ENCODE measurements at regions of chr2 and their contacts with region 1.

Region 1: GRCh38 chr2:11129598-11130449 is 25.4 kb upstream of the SLC66A3 start:
- DNase-seq: no peak
- H3K4me3 ChIP-seq: peak overlapping the region in 2 of 3 experiments; percentile 16 to 35
- H3K27ac ChIP-seq: no peak overlapping the region
- H3K4me1 ChIP-seq: peaks cover 28% of the 10 kb centered on the region
- H3K27me3 ChIP-seq: no peaks in the 10 kb centered on the region
- CTCF ChIP-seq: peak; percentile 22 to 65

Region 2: GRCh38 chr2:11065883-11066485 is 63.8 kb before region 1 on chr2:
- CTCF ChIA-PET with region 1: no interaction called
- dilution Hi-C with region 1: loop called (anchors 5 kb)
- in situ Hi-C with region 1: no loop called
- intact Hi-C with region 1: no loop called
- DNase-seq: no peak
- H3K4me3 ChIP-seq: no peak overlapping the region
- H3K27ac ChIP-seq: no peak overlapping the region
- H3K4me1 ChIP-seq: no peaks in the 10 kb centered on the region
- H3K27me3 ChIP-seq: peaks cover 8% of the 10 kb centered on the region
- CTCF ChIP-seq: no peak

Region 3: DNA sequence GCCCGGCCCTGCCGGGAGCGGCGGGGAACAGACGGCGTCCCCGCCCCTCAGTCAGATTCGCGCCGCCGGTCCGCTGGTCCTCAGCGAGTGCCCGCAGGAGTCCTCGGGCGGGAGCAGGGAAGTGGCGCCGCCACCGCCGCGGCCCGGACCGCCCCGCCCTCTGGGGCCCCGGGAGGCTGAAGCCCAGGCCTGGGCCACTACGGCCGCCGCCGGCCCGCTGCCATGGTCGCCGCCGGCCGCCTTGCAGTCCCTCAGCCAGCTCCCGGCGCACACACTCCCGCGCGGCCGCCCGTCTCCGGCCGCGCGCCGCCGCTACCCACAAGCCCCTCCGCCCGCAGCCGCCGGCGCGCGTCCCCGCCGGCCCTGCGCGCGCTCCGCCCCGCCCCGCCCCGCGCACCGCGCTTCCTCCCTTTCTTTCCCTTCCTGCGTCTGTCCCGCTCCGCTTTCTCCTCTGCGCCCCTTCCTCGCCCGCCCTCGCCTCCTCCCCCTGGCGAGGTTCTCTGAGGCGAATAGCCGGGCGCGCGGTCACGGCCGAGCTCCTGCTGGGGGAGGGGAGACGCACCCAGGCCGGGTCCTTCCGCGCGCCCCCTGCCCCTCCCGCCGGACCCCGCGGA is 214.6 kb after region 1 on chr2 and contains the start of gene ROCK2:
- CTCF ChIA-PET with region 1: no interaction called
- dilution Hi-C with region 1: no loop called
- in situ Hi-C with region 1: no loop called
- intact Hi-C with region 1: loop called (anchors 2 kb)
- DNase-seq: peak; percentile 74
- H3K4me3 ChIP-seq: peak within 1 kb of the TSS; percentile 91 to 96 (median 92)
- H3K27ac ChIP-seq: peak within 1 kb of the TSS; percentile 93
- H3K4me1 ChIP-seq: peaks cover 24% of the 10 kb centered on the region
- H3K27me3 ChIP-seq: no peaks in the 10 kb centered on the region
- CTCF ChIP-seq: no peak
- total RNA-seq, gene ROCK2: 38.6 to 44.0 TPM

Region 4: GRCh38 chr2:11446733-11447248 is 317.0 kb after region 1 on chr2:
- CTCF ChIA-PET with region 1: interaction called, 6 read pairs
- dilution Hi-C with region 1: no loop called
- in situ Hi-C with region 1: loop called in 1 of 2 experiments (anchors 10 kb)
- intact Hi-C with region 1: loop called (anchors 1 kb)
- DNase-seq: peak; percentile 48
- H3K4me3 ChIP-seq: no peak overlapping the region
- H3K27ac ChIP-seq: no peak overlapping the region
- H3K4me1 ChIP-seq: no peaks in the 10 kb centered on the region
- H3K27me3 ChIP-seq: no peaks in the 10 kb centered on the region
- CTCF ChIP-seq: peak; percentile 71 to 88

Region 5: DNA sequence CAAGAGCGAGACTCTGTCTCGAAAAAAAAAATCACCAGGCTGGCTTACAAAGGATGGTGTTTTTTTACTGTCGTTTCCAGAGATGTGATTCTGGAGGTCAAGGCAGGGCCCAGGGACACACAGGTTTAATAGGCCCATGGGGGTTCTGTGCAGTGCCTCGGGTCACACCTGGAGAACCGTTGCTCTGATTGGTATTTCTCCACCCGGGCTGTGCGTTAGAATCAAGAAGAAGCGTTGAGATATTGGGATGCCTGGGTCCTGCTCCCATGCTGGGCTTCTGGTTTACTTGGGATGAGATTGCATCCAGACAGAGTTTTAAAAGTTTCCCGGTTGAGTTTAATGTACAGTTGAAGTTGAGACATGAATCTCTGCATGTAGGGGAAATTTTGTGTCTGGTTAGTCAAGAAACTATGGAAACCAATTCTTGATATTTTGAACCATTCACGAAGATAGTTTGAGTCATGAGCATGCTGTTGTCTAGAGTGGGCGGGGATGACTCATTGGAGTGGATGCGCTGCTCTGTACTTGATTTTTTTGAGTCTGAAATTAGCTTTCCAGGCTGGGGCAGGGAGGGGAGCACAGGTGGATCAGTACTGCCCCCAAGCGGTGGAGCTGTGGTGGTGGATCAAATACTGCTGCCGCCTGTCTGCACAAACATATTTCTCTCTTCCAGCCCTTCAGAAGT is 454.2 kb after region 1 on chr2:
- CTCF ChIA-PET with region 1: interaction called, 16 read pairs
- dilution Hi-C with region 1: loop called (anchors 25 kb)
- in situ Hi-C with region 1: loop called (anchors 10 kb)
- intact Hi-C with region 1: loop called (anchors 1 kb)
- DNase-seq: peak; percentile 95
- H3K4me3 ChIP-seq: no peak overlapping the region
- H3K27ac ChIP-seq: peak overlapping the region; percentile 30
- H3K4me1 ChIP-seq: peaks cover 4% of the 10 kb centered on the region
- H3K27me3 ChIP-seq: no peaks in the 10 kb centered on the region
- CTCF ChIP-seq: peak; percentile 78 to 92

Measured in mammary epithelial cell (primary cell).